Dorsolateral prefrontal cortex (tissue), 120 donors: ENCODE measurements at regions of chr22 and their contacts with region 1.

Region 1: GRCh38 chr22:21045585-21046294 is at the start of gene LRRC74B:
- DNase-seq: peak; percentile 76 to 95 (median 92)
- H3K4me3 ChIP-seq: peak within 1 kb of the TSS; percentile 40 to 88 (median 68)
- H3K27ac ChIP-seq: peak within 1 kb of the TSS in 45 of 59 donors; percentile 2 to 82 (median 57)
- H3K27me3 ChIP-seq: no peaks in the 10 kb centered on the region
- CTCF ChIP-seq: peak in 1 of 56 donors; percentile 11
- total RNA-seq, gene LRRC74B: 0.13 to 2.1 (median 0.39) TPM in 82 of 120 experiments, not detected in the others

Region 2: DNA sequence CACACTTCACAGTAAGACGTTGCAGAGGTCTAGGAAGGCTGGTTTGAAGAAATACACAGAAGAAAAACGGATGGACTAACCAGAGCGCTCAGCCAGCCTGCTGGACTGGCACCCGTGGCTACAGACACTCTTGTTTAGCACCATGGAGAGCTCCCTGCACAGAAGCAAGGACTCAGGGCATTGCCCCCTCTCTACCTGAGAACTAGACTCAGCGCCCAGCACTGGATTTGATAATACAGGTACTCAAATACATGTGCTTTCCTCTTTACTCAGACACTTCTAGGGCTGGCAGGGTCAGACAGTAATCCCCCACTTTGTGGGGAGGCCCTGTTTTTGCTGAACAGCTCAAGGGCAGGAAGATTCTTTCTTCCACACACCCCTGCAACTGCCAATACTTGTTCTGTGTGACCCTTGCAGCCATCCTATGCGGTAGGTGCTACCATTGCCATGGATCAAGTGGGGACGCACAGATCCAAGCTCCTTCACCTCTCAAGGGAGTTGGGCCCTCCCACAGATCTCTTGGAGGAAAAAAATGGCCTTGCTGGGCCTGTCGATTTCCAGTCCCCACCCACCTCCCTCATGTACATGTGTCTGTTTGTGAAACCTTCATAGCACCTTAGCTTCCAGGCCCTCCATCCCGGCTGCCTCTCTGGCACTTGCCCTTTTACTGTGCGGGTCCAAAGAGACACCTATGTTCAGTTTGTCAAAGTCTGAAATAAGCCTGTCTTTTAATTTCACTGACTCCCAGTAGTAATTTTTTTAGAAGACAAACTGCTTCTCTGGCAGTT is 35.9 kb before region 1 on chr22:
- intact Hi-C with region 1: loop called in 1 of 2 experiments (anchors 5 kb)
- DNase-seq: no peak
- H3K4me3 ChIP-seq: no peak overlapping the region
- H3K27ac ChIP-seq: no peak overlapping the region
- H3K27me3 ChIP-seq: no peaks in the 10 kb centered on the region
- CTCF ChIP-seq: no peak

Region 3: DNA sequence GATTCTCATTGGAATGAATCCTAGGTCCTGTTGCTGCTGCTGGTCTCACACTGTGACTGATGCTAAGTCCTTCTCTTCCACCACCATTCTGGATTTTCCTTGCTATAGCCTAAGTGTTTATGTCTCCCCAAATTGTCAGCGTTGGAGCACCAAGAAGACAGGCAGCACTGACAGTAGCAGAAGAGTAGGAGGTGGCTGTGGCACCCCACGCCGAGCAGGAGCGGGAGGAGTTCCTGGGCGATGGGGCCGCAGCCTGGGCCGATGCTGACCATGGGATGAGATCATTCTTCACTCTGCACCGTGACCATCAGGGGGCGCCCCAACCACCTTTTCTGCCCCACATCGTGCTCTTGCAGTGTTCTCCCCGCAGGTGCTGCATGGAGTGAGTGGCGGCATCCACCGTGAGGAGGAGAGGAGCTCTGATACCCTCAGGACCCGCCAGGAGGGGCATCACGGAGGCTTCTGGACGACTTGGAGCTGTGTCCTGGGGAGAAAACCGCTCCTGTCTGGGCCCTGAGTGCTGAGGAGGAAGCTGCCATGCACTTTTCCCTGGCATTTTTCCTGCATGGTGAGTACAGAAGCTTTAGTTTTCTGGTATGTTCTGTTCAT is 57.0 kb after region 1 on chr22:
- intact Hi-C with region 1: no loop called
- DNase-seq: peak; percentile 63 to 91 (median 74)
- H3K4me3 ChIP-seq: peak overlapping the region in 50 of 59 donors; percentile 7 to 58 (median 40)
- H3K27ac ChIP-seq: peak overlapping the region in 1 of 59 donors; percentile 36
- H3K27me3 ChIP-seq: peaks cover 0 to 2% (median 0%) of the 10 kb centered on the region in 45 donors
- CTCF ChIP-seq: peak; percentile 53 to 91 (median 78)